CD8-positive, alpha-beta T cell (primary cell): ENCODE measurements at regions of chr12 and their contacts with region 1.

Region 1: DNA sequence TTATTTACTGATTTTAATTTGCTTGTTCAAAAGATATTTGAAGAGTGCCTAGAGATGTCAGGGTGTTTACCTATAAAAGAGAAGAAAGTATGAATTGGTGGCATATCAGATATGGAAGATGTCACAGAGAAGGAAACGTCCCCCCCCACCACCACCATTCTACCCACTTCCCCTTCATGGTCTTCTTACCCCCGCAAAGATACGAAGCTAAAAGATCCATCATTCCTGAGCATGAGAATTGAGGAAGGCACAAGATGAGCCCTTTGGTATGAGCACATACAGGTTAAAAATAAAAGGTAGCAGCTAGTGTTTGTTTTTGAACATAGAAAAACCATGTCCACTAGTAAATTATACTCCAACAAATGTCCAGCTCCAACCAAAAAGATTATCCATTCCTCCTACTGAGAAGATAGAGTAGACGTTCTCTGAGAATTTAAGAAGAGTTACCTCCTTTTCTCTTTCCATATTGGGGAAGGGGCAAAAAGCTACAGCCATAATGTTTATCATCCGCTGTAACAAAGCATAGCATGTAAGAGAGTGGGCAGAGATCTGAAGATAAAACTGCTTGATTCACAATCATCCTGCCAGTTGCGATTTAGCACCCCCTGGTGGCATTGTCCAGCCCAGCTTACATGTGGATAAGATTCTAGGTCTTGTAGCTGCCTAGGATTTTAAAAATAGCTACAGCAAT is 29.1 kb downstream of the NFYB start:
- DNase-seq: peak; percentile 69 to 92 (median 88)
- ATAC-seq: peak; percentile 98
- H3K4me3 ChIP-seq: no peak overlapping the region
- H3K4me3 Mint-ChIP-seq: peak overlapping the region; percentile 76
- H3K27ac ChIP-seq: no peak overlapping the region
- H3K27ac Mint-ChIP-seq: peak overlapping the region; percentile 80
- H3K4me1 ChIP-seq: peaks cover 8% of the 10 kb centered on the region
- H3K4me1 Mint-ChIP-seq: peaks cover 15% of the 10 kb centered on the region
- H3K27me3 ChIP-seq: no peaks in the 10 kb centered on the region
- H3K27me3 Mint-ChIP-seq: no peaks in the 10 kb centered on the region
- CTCF ChIP-seq: peak; percentile 74

Region 2: GRCh38 chr12:103771466-103771865 is 337.4 kb before region 1 on chr12:
- CTCF ChIA-PET with region 1: no interaction called
- POLR2A ChIA-PET with region 1: no interaction called
- intact Hi-C with region 1: loop called (anchors 2 to 5 kb)
- DNase-seq: peak in 2 of 9 experiments; percentile 8 to 16
- ATAC-seq: no peak
- H3K4me3 ChIP-seq: no peak overlapping the region
- H3K4me3 Mint-ChIP-seq: no peak overlapping the region
- H3K27ac ChIP-seq: no peak overlapping the region
- H3K27ac Mint-ChIP-seq: no peak overlapping the region
- H3K4me1 ChIP-seq: no peaks in the 10 kb centered on the region
- H3K4me1 Mint-ChIP-seq: no peaks in the 10 kb centered on the region
- H3K27me3 ChIP-seq: no peaks in the 10 kb centered on the region
- H3K27me3 Mint-ChIP-seq: no peaks in the 10 kb centered on the region
- CTCF ChIP-seq: no peak

Region 3: DNA sequence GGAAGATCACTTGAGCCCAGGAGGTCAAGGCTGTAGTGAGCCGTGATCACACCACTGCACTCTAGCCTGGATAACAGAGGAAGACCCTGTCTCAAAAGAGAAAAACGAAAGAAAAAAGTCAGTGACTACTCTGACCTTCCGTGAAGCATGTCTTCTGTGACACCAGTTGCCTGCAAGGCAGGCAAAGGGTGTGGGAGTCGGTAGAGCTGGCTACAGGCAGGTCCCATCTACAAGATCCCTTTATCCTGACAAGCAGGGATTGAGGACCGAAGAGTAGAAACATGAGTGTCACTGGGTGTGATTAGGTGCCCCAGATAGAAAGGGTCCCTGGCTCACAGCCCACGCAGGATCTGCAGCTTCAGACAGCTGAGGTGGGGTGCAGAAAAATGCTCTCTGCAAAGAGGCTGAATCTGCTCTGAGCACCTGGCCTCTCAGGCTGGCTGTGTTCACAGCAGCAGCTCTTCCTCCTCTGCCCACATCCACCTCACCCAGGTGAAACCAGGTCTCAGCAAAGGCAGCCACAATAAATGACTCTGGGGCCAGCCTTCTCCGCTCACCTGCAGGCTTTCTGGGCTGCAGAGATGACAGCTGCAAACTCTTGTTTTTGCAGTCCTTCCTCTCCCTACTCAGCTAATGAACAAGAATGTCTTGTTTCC is 207.3 kb before region 1 on chr12:
- CTCF ChIA-PET with region 1: interaction called, 12 read pairs
- POLR2A ChIA-PET with region 1: interaction called, 3 read pairs
- intact Hi-C with region 1: no loop called
- DNase-seq: peak; percentile 22 to 81 (median 59)
- ATAC-seq: peak; percentile 96
- H3K4me3 ChIP-seq: peak overlapping the region; percentile 6 to 53
- H3K4me3 Mint-ChIP-seq: peak overlapping the region; percentile 76
- H3K27ac ChIP-seq: peak overlapping the region; percentile 28 to 54
- H3K27ac Mint-ChIP-seq: peak overlapping the region; percentile 94
- H3K4me1 ChIP-seq: peaks cover 56% of the 10 kb centered on the region
- H3K4me1 Mint-ChIP-seq: peaks cover 69% of the 10 kb centered on the region
- H3K27me3 ChIP-seq: no peaks in the 10 kb centered on the region
- H3K27me3 Mint-ChIP-seq: no peaks in the 10 kb centered on the region
- CTCF ChIP-seq: no peak

Region 4: GRCh38 chr12:104057771-104058197 is 51.1 kb before region 1 on chr12:
- CTCF ChIA-PET with region 1: interaction called, 64 read pairs
- POLR2A ChIA-PET with region 1: interaction called, 3 read pairs
- intact Hi-C with region 1: loop called (anchors 1 kb)
- DNase-seq: peak in 2 of 9 experiments; percentile 37 to 50
- ATAC-seq: peak; percentile 64
- H3K4me3 ChIP-seq: no peak overlapping the region
- H3K4me3 Mint-ChIP-seq: no peak overlapping the region
- H3K27ac ChIP-seq: no peak overlapping the region
- H3K27ac Mint-ChIP-seq: no peak overlapping the region
- H3K4me1 ChIP-seq: no peaks in the 10 kb centered on the region
- H3K4me1 Mint-ChIP-seq: no peaks in the 10 kb centered on the region
- H3K27me3 ChIP-seq: peaks cover 0 to 3% of the 10 kb centered on the region in 2 experiments
- H3K27me3 Mint-ChIP-seq: peaks cover 17% of the 10 kb centered on the region
- CTCF ChIP-seq: peak; percentile 61

Region 5: GRCh38 chr12:104090687-104091086 is 18.2 kb before region 1 on chr12:
- CTCF ChIA-PET with region 1: interaction called, 21 read pairs
- POLR2A ChIA-PET with region 1: no interaction called
- intact Hi-C with region 1: no loop called
- DNase-seq: no peak
- ATAC-seq: no peak
- H3K4me3 ChIP-seq: no peak overlapping the region
- H3K4me3 Mint-ChIP-seq: no peak overlapping the region
- H3K27ac ChIP-seq: no peak overlapping the region
- H3K27ac Mint-ChIP-seq: no peak overlapping the region
- H3K4me1 ChIP-seq: no peaks in the 10 kb centered on the region
- H3K4me1 Mint-ChIP-seq: peaks cover 2% of the 10 kb centered on the region
- H3K27me3 ChIP-seq: no peaks in the 10 kb centered on the region
- H3K27me3 Mint-ChIP-seq: no peaks in the 10 kb centered on the region
- CTCF ChIP-seq: no peak

Region 6: DNA sequence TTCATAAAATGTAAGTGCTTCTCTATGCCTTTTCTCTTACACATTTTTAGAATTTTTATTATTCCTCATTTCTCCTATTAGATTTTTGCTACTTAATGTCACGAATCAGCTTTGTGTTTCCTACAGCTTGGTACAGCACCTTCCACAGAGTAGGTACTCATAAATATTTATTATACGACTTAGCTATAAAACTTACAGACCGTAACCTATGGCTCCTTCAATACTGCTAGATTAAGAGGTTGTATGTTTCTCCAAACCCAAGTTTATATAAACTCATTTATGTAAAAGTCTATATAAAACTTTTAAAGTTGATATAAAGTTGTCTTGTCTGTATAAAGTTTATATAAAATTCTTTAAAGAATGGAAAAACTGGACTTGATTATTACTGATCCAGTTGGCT is 17.6 kb after region 1 on chr12:
- CTCF ChIA-PET with region 1: interaction called, 21 read pairs
- POLR2A ChIA-PET with region 1: interaction called, 3 read pairs
- intact Hi-C with region 1: no loop called
- DNase-seq: no peak
- ATAC-seq: no peak
- H3K4me3 ChIP-seq: no peak overlapping the region
- H3K4me3 Mint-ChIP-seq: no peak overlapping the region
- H3K27ac ChIP-seq: no peak overlapping the region
- H3K27ac Mint-ChIP-seq: no peak overlapping the region
- H3K4me1 ChIP-seq: no peaks in the 10 kb centered on the region
- H3K4me1 Mint-ChIP-seq: peaks cover 28% of the 10 kb centered on the region
- H3K27me3 ChIP-seq: no peaks in the 10 kb centered on the region
- H3K27me3 Mint-ChIP-seq: no peaks in the 10 kb centered on the region
- CTCF ChIP-seq: no peak

Region 7: DNA sequence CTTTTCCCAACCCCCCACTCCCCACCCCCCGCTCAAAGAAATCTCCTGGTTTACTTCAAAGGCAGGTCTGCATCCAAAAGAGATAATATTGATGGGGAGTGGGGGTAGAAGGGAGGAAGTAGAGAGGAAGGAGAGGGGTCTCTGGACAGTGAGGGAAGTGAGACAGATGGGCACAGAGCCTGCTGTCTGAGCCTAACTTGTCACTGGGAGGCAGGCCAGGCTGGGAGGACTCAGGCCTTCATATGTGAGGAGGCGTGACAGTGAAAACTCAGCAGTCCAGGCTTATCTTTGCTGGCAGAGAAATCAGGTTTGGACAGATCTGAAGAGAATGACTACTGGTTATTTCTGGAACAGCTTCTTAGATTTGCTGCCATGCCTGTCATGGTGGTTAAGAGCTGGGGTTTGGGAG is 1837.6 kb after region 1 on chr12:
- CTCF ChIA-PET with region 1: no interaction called
- POLR2A ChIA-PET with region 1: no interaction called
- intact Hi-C with region 1: no loop called
- DNase-seq: no peak
- ATAC-seq: no peak
- H3K4me3 ChIP-seq: no peak overlapping the region
- H3K4me3 Mint-ChIP-seq: no peak overlapping the region
- H3K27ac ChIP-seq: no peak overlapping the region
- H3K27ac Mint-ChIP-seq: no peak overlapping the region
- H3K4me1 ChIP-seq: no peaks in the 10 kb centered on the region
- H3K4me1 Mint-ChIP-seq: no peaks in the 10 kb centered on the region
- H3K27me3 ChIP-seq: no peaks in the 10 kb centered on the region
- H3K27me3 Mint-ChIP-seq: peaks cover 2% of the 10 kb centered on the region
- CTCF ChIP-seq: no peak